ENCODE measurements at regions of chr10 and their contacts with region 1.

Region 1: DNA sequence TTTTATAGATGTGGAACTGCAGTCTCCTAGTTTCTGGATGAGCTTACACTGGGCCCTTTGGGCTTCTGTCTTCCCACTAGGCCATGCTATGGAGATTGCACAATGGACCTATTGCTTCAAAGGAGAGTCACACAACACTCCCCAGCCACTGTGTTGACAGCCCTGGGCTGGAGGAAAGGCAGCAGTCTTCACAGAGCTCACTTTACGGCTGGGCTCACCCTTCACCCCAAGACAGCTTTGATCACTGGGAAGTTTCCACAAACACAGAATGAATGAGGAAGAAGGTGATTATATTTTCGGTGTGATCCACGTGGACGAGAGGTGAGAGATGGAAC is 92.7 kb upstream of the GDF10 start:
- DNase-seq: peak; percentile 44
- H3K4me3 Mint-ChIP-seq: peak overlapping the region; percentile 36
- H3K27ac Mint-ChIP-seq: peak overlapping the region; percentile 85
- H3K4me1 Mint-ChIP-seq: peaks cover 53% of the 10 kb centered on the region
- H3K27me3 Mint-ChIP-seq: no peaks in the 10 kb centered on the region

Region 2: DNA sequence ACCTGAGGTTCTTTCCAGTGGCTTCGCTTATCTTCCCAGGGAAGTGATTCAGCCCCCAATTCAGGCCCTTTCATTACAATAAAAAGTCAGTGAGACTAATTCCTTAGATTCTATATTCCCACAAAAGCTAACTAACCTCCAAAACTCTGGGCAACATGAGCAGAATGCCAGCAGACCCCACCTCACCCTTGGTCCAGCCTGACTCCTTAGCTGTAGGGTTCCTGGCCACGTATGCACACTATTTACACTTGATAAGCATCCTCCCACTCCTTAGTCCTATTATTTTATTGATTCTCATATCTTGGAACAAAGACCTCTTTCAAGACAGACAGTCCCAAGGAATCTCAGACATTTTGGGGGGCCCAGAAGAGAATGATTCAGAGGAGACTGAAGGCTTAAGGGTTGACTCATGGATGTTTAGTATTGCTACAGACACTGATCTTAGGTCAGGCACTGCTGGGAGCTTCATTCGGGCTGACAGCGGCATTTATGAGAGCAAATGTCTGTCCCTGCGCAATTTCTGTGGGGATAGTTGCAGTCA is 69.9 kb before region 1 on chr10:
- CTCF ChIA-PET with region 1: no interaction called
- intact Hi-C with region 1: no loop called
- DNase-seq: no peak
- H3K4me3 Mint-ChIP-seq: no peak overlapping the region
- H3K27ac Mint-ChIP-seq: no peak overlapping the region
- H3K4me1 Mint-ChIP-seq: peaks cover 7% of the 10 kb centered on the region
- H3K27me3 Mint-ChIP-seq: no peaks in the 10 kb centered on the region

Region 3: DNA sequence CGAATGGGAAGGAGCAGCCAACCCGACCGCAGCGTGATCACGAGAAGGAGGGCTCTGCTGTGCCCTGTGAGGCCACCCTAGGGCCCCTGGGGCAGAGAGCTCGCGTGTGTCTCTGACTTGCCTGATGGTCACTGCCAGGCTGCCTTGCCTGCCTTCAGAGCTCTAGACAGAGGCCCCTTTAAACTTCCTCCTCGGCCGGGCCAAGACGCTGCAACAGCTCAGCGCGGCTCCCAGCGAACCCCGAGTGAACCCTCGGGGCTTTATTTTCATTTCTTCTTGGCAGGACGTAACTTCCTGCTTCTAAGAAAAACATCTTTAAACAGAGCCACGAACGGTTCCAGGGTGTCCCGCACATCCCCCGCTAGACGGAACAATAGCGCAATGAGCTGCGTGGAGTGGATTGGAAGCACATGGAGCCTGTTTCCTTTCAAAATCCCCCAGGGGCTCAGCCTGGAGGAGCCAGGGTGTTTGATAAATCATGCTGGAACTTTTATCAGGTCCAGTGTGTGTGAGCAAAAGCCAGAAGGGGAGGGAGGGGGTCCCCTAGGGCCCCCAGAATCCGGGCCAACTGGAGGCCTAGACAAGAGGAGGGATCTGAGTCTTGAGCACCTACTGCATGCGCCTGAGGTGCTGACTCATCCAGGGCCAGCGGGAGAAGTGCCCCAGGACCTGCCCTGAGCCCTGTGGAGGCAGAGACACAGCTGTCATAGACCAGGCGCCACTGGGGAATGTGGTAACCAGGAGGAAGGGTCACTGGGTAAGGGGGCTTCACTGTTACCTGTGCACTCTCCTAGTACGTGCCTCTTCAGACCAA is 41.3 kb before region 1 on chr10:
- CTCF ChIA-PET with region 1: no interaction called
- intact Hi-C with region 1: loop called (anchors 5 kb)
- DNase-seq: peak; percentile 62
- H3K4me3 Mint-ChIP-seq: peak overlapping the region; percentile 66
- H3K27ac Mint-ChIP-seq: peak overlapping the region; percentile 87
- H3K4me1 Mint-ChIP-seq: peaks cover 24% of the 10 kb centered on the region
- H3K27me3 Mint-ChIP-seq: no peaks in the 10 kb centered on the region

Region 4: GRCh38 chr10:47181052-47181849 is 26.0 kb before region 1 on chr10:
- CTCF ChIA-PET with region 1: no interaction called
- intact Hi-C with region 1: no loop called
- DNase-seq: no peak
- H3K4me3 Mint-ChIP-seq: no peak overlapping the region
- H3K27ac Mint-ChIP-seq: no peak overlapping the region
- H3K4me1 Mint-ChIP-seq: no peaks in the 10 kb centered on the region
- H3K27me3 Mint-ChIP-seq: no peaks in the 10 kb centered on the region

Region 5: DNA sequence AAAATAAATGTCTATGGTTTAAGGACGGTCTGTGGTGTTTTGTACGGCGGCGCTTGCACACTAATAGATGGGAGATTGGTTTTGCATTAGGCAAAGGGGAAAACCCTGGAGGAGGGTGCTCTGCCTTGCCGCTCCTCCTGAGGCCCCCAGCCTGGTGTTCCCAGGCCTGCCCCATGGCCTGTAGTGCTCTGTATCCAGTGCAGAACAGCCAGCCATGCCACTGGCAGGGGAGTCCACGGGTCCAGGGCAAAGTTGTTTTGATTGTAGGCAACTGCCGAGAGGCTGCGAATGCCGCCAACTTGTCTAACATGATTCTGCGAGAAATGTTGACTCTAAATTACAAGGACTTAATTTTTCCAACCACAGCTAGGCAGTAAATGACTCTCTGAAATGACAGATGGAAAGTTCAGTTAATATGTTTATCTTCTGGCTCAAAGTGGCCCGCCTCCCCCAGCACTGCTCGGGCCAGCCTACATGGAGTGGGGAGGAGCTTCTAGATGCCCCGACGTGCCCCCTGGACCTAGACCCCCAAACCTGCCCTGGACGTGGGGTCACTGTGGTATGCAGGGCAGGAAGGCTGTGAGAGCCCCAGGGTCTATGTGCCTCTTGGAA is 11.9 kb before region 1 on chr10:
- CTCF ChIA-PET with region 1: no interaction called
- intact Hi-C with region 1: loop called (anchors 1 kb)
- DNase-seq: peak; percentile 34
- H3K4me3 Mint-ChIP-seq: no peak overlapping the region
- H3K27ac Mint-ChIP-seq: peak overlapping the region; percentile 63
- H3K4me1 Mint-ChIP-seq: peaks cover 12% of the 10 kb centered on the region
- H3K27me3 Mint-ChIP-seq: no peaks in the 10 kb centered on the region

Region 6: GRCh38 chr10:47230482-47230881 is 23.2 kb after region 1 on chr10:
- CTCF ChIA-PET with region 1: no interaction called
- intact Hi-C with region 1: loop called (anchors 2 kb)
- DNase-seq: no peak
- H3K4me3 Mint-ChIP-seq: no peak overlapping the region
- H3K27ac Mint-ChIP-seq: no peak overlapping the region
- H3K4me1 Mint-ChIP-seq: peaks cover 13% of the 10 kb centered on the region
- H3K27me3 Mint-ChIP-seq: no peaks in the 10 kb centered on the region

Region 7: GRCh38 chr10:47317251-47317650 is 110.0 kb after region 1 on chr10:
- CTCF ChIA-PET with region 1: no interaction called
- intact Hi-C with region 1: no loop called
- DNase-seq: no peak
- H3K4me3 Mint-ChIP-seq: no peak overlapping the region
- H3K27ac Mint-ChIP-seq: no peak overlapping the region
- H3K4me1 Mint-ChIP-seq: peaks cover under 1% of the 10 kb centered on the region
- H3K27me3 Mint-ChIP-seq: no peaks in the 10 kb centered on the region